CD8-positive, alpha-beta T cell (primary cell): ENCODE measurements at regions of chr22 and their contacts with region 1.

Region 1: GRCh38 chr22:29766632-29767170 is at the start of gene ZMAT5:
- DNase-seq: peak; percentile 77 to 97 (median 92)
- ATAC-seq: peak; percentile 94
- H3K4me3 ChIP-seq: peak within 1 kb of the TSS; percentile 83 to 95
- H3K4me3 Mint-ChIP-seq: peak within 1 kb of the TSS; percentile 100
- H3K27ac ChIP-seq: peak within 1 kb of the TSS; percentile 72 to 84
- H3K27ac Mint-ChIP-seq: peak within 1 kb of the TSS; percentile 98
- H3K4me1 ChIP-seq: peaks cover 23% of the 10 kb centered on the region
- H3K4me1 Mint-ChIP-seq: peaks cover 41% of the 10 kb centered on the region
- H3K27me3 ChIP-seq: no peaks in the 10 kb centered on the region
- H3K27me3 Mint-ChIP-seq: no peaks in the 10 kb centered on the region
- CTCF ChIP-seq: no peak
- total RNA-seq, gene ZMAT5: 4.3 to 5.2 TPM

Region 2: GRCh38 chr22:29408945-29409344 is 357.8 kb before region 1 on chr22:
- CTCF ChIA-PET with region 1: no interaction called
- POLR2A ChIA-PET with region 1: no interaction called
- intact Hi-C with region 1: loop called in 1 of 2 experiments (anchors 10 kb)
- DNase-seq: no peak
- ATAC-seq: no peak
- H3K4me3 ChIP-seq: no peak overlapping the region
- H3K4me3 Mint-ChIP-seq: no peak overlapping the region
- H3K27ac ChIP-seq: no peak overlapping the region
- H3K27ac Mint-ChIP-seq: no peak overlapping the region
- H3K4me1 ChIP-seq: no peaks in the 10 kb centered on the region
- H3K4me1 Mint-ChIP-seq: peaks cover 4% of the 10 kb centered on the region
- H3K27me3 ChIP-seq: no peaks in the 10 kb centered on the region
- H3K27me3 Mint-ChIP-seq: no peaks in the 10 kb centered on the region
- CTCF ChIP-seq: no peak

Region 3: DNA sequence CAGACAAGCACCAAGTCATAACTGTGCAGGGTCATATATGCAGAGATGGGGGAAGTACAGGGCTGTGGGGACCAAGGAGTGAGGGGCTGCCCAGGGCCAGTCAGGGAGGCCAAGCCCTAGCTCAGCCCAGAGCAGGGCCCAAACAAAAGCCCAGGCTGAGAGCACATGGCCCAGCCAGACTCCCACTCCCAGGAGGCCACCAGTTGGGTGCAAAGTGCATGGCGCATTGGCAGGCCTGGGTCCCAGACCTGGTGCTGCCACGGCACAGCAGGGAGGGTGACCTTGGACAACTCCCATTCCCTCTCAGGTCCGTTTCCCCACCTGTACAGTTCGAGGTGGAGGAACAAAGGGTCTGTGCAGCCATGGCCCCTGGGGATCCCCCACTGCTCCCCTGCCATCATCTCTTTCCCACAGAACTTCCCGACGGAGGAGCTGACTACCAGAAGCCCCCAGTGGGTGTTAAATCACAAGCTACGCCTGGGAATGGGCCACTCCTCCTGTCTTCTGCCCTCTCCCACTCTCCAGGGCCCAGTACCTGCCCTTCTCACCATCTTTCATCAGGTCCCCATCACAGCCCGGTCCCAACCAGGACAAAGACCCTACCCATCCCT is 186.4 kb before region 1 on chr22:
- CTCF ChIA-PET with region 1: no interaction called
- POLR2A ChIA-PET with region 1: no interaction called
- intact Hi-C with region 1: loop called in 1 of 2 experiments (anchors 1 kb)
- DNase-seq: peak in 3 of 9 experiments; percentile 17 to 49 (median 36)
- ATAC-seq: peak; percentile 16
- H3K4me3 ChIP-seq: peak overlapping the region; percentile 69 to 80
- H3K4me3 Mint-ChIP-seq: peak overlapping the region; percentile 93
- H3K27ac ChIP-seq: peak overlapping the region; percentile 59 to 61
- H3K27ac Mint-ChIP-seq: peak overlapping the region; percentile 90
- H3K4me1 ChIP-seq: peaks cover 15% of the 10 kb centered on the region
- H3K4me1 Mint-ChIP-seq: peaks cover 21% of the 10 kb centered on the region
- H3K27me3 ChIP-seq: no peaks in the 10 kb centered on the region
- H3K27me3 Mint-ChIP-seq: no peaks in the 10 kb centered on the region
- CTCF ChIP-seq: no peak

Region 4: GRCh38 chr22:29837780-29838598 is 71.3 kb after region 1 on chr22 and contains the start of gene ASCC2:
- CTCF ChIA-PET with region 1: no interaction called
- POLR2A ChIA-PET with region 1: interaction called, 7 read pairs
- intact Hi-C with region 1: loop called (anchors 1 kb)
- DNase-seq: peak; percentile 97 to 100 (median 99)
- ATAC-seq: peak; percentile 98
- H3K4me3 ChIP-seq: peak within 1 kb of the TSS; percentile 76 to 85
- H3K4me3 Mint-ChIP-seq: peak within 1 kb of the TSS; percentile 92
- H3K27ac ChIP-seq: peak within 1 kb of the TSS; percentile 55 to 85
- H3K27ac Mint-ChIP-seq: peak within 1 kb of the TSS; percentile 97
- H3K4me1 ChIP-seq: peaks cover 15% of the 10 kb centered on the region
- H3K4me1 Mint-ChIP-seq: peaks cover 43% of the 10 kb centered on the region
- H3K27me3 ChIP-seq: no peaks in the 10 kb centered on the region
- H3K27me3 Mint-ChIP-seq: no peaks in the 10 kb centered on the region
- CTCF ChIP-seq: no peak
- total RNA-seq, gene ASCC2: 66.2 to 76.5 TPM

Region 5: DNA sequence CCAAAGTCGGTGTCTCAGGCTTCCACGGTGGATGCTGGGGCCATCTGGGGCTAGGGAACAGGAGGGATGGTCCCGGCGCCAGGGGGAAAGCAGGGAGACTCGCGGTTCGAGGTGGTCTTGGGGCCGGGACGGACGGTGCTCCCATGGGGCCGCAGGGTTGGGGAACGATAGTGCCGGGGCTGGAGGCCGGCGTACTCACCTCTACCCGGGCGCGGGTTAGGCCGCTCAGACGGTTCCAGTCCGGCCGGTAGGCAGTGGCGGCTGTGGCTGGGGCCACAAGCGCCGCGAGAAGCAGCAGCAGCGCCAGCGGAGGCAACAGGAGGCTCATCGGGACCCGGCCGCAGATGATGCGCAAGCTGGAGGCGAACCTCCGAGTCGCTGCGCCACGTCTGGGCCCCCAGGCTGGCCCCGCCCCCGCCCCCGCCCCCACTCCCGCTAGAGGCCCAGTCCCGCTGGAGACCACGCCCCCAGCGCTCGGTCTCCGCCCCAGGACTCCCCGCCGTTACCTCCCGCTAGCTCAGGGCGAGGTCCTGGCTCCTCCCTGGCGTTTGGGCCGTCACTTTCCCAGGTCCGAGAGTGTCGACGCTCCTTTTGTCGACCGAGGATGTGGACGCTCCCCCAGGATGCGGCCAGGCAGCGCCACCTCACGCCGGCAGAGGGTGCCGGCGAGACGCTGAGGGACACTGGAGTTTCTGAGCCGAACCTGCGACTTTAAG is 1340.6 kb after region 1 on chr22 and contains the start of gene SELENOM:
- CTCF ChIA-PET with region 1: no interaction called
- POLR2A ChIA-PET with region 1: no interaction called
- intact Hi-C with region 1: loop called in 1 of 2 experiments (anchors 5 kb)
- DNase-seq: peak; percentile 69 to 94 (median 85)
- ATAC-seq: peak; percentile 96
- H3K4me3 ChIP-seq: peak within 1 kb of the TSS; percentile 80 to 84
- H3K4me3 Mint-ChIP-seq: peak within 1 kb of the TSS; percentile 98
- H3K27ac ChIP-seq: peak within 1 kb of the TSS; percentile 72 to 80
- H3K27ac Mint-ChIP-seq: peak within 1 kb of the TSS; percentile 91
- H3K4me1 ChIP-seq: peaks cover 17% of the 10 kb centered on the region
- H3K4me1 Mint-ChIP-seq: peaks cover 25% of the 10 kb centered on the region
- H3K27me3 ChIP-seq: no peaks in the 10 kb centered on the region
- H3K27me3 Mint-ChIP-seq: no peaks in the 10 kb centered on the region
- CTCF ChIP-seq: peak; percentile 70
- total RNA-seq, gene SELENOM: 55.6 to 62.2 TPM

Region 6: GRCh38 chr22:31749636-31750364 is 1983.1 kb after region 1 on chr22 and contains the start of gene PRR14L:
- CTCF ChIA-PET with region 1: no interaction called
- POLR2A ChIA-PET with region 1: no interaction called
- intact Hi-C with region 1: loop called in 1 of 2 experiments (anchors 5 kb)
- DNase-seq: peak; percentile 96 to 100 (median 99)
- ATAC-seq: peak; percentile 75
- H3K4me3 ChIP-seq: peak within 1 kb of the TSS; percentile 84 to 90
- H3K4me3 Mint-ChIP-seq: peak within 1 kb of the TSS; percentile 98
- H3K27ac ChIP-seq: peak within 1 kb of the TSS; percentile 79 to 84
- H3K27ac Mint-ChIP-seq: peak within 1 kb of the TSS; percentile 97
- H3K4me1 ChIP-seq: peaks cover 40% of the 10 kb centered on the region
- H3K4me1 Mint-ChIP-seq: peaks cover 53% of the 10 kb centered on the region
- H3K27me3 ChIP-seq: no peaks in the 10 kb centered on the region
- H3K27me3 Mint-ChIP-seq: no peaks in the 10 kb centered on the region
- CTCF ChIP-seq: no peak
- total RNA-seq, gene PRR14L: 17.8 to 21.2 TPM